Panc1 (cell line): ENCODE measurements at regions of chr12 and their contacts with region 1.

Region 1: DNA sequence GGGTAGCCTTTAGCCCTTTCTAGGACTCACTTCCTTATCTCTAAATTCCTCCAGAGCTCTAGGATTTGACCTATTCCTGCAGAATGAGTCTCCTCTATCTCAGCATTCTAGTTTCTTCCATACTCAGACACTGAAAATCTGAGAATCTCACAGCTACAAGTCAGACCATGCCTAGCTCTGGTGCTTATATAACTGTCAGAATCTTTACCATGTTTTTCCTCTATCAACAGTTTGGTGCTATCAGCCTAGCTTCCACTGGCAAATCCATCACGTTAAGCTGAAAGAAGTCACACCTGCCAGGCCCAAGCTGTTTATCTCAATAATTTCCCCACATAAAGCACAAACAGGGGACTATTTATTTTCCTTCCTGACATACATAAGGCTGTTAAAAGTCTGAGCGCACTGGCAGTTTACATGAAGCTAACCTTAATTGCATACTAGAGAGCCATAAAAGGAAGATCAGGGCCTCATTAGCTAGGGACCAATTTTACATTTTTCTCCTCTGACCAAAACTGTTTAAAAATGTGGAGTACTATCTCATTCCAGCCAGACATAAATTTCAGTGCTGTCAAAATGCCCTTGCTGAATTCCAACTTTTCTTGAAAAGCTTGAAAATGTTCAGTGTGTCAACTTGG is 270.5 kb downstream of the C12orf75 start:
- DNase-seq: no peak
- ATAC-seq: no peak
- H3K4me3 ChIP-seq: no peak overlapping the region
- H3K27ac ChIP-seq: no peak overlapping the region
- H3K4me1 ChIP-seq: no peaks in the 10 kb centered on the region
- H3K27me3 ChIP-seq: no peaks in the 10 kb centered on the region
- CTCF ChIP-seq: no peak

Region 2: DNA sequence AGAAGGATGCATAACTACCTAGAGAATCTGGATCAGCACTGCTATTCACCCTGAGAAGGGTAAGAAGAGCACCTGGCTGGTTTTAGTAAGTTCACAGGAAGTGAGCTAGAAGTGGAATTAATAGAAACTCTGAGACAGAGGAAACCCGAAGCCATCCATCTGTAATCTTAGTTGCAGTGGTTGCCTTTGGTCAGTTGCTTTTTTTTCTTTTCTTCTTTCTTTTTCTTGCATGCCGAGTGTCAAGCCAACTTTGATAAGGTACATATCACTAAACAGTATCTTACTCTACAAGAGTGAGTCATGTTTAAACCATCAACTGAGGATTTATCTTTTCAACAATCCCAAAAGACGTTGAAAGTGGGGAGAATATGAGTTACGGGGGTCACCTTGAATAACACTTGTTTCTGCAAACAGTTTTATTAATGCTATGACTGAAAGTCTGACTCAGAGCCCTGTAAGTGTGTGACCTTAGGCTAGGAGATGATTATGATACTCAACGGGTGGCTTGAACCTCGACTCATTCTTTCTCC is 243.8 kb before region 1 on chr12:
- CTCF ChIA-PET with region 1: no interaction called
- POLR2A ChIA-PET with region 1: no interaction called
- in situ Hi-C with region 1: no loop called
- intact Hi-C with region 1: no loop called
- DNase-seq: no peak
- ATAC-seq: no peak
- H3K4me3 ChIP-seq: no peak overlapping the region
- H3K27ac ChIP-seq: peak overlapping the region; percentile 24; the same call in 1 of the 2 replicates
- H3K4me1 ChIP-seq: peaks cover 12% of the 10 kb centered on the region
- H3K27me3 ChIP-seq: no peaks in the 10 kb centered on the region
- CTCF ChIP-seq: no peak

Region 3: DNA sequence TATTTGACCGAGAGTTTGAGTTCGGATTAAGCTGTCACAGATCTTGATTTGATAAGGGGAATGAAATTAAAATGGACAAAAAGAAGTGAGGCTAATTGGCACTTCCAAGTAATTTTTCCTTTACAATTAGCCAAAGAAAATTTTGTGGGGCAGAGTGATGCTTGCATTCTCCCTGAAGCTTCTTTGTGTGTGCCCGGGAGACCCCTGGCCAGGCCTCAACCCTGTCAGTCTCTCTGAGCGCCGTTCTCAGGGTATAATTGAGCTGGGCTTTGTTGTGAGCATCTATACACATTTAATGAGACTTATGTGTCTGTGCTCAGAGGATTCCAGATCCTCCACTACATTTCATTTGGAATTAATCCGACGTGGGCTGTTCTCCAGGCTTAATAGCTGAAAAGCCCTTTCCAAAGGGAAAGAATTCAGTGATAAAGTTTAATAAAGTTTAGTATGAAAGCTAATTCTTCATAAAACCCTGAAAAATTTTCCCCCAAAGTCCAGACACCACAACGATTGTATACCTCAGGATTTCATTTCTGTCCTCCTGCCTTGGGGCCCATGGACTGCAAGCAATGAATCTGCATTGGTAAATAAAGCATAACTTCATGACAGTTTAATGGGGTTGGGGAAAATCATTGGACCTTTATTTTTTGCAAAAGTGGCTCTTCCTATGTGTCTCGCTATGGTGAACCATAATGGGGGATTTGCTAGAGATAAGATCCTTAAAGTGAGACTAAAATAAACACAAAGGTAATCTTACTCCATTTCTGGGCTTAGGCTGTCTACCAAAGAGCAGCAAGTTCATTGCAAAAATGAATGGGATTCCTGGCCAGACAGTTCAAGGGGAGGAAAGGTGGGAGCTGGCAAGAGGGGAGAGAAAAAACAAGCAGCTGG is 22.1 kb after region 1 on chr12:
- CTCF ChIA-PET with region 1: no interaction called
- POLR2A ChIA-PET with region 1: interaction called, 12 read pairs
- in situ Hi-C with region 1: no loop called
- intact Hi-C with region 1: no loop called
- DNase-seq: no peak
- ATAC-seq: no peak
- H3K4me3 ChIP-seq: no peak overlapping the region
- H3K27ac ChIP-seq: no peak overlapping the region
- H3K4me1 ChIP-seq: no peaks in the 10 kb centered on the region
- H3K27me3 ChIP-seq: no peaks in the 10 kb centered on the region
- CTCF ChIP-seq: no peak